ENCODE measurements at regions of chr2 and their contacts with region 1.

Region 1: DNA sequence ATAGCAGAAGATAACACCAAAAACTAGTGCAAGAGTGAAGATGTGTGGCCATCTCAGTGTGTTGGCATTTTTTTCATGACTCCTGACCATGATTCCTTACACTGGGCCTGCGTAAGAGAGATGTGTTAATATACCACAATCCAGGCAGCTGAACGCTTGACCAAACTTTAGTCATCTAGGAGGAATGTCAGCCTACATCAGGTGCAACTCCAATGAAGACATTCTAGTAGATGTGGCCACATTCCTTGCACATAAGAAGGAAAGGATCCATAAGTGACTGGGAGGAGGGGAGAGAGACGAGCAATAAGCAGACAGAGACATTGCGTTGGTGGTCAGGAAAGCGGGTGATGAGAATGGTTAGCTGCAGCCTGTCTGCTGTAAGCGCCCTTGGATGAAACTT is 42.6 kb downstream of the CYRIA start:
- DNase-seq: no peak
- H3K4me3 ChIP-seq: peak overlapping the region in 1 of 8 donors; percentile 33
- H3K27ac ChIP-seq: peak overlapping the region; percentile 66 to 96 (median 92)
- H3K4me1 ChIP-seq: peaks cover 56 to 100% (median 75%) of the 10 kb centered on the region in 6 donors
- H3K27me3 ChIP-seq: no peaks in the 10 kb centered on the region
- CTCF ChIP-seq: no peak
- POLR2A ChIP-seq: no peak

Region 2: GRCh38 chr2:16664052-16664731 is 41.2 kb after region 1 on chr2:
- intact Hi-C with region 1: loop called (anchors 5 kb)
- DNase-seq: peak; percentile 85
- H3K4me3 ChIP-seq: peak overlapping the region; percentile 60 to 80 (median 66)
- H3K27ac ChIP-seq: peak overlapping the region; percentile 46 to 95 (median 86)
- H3K4me1 ChIP-seq: peaks cover 44 to 75% (median 67%) of the 10 kb centered on the region in 6 donors
- H3K27me3 ChIP-seq: peaks cover 0 to 19% (median 0%) of the 10 kb centered on the region in 7 donors
- CTCF ChIP-seq: no peak
- POLR2A ChIP-seq: peak in 1 of 3 donors; percentile 18

Measured in spleen (tissue), 13 donors.